ENCODE measurements at regions of chr2 and their contacts with region 1.

Region 1: DNA sequence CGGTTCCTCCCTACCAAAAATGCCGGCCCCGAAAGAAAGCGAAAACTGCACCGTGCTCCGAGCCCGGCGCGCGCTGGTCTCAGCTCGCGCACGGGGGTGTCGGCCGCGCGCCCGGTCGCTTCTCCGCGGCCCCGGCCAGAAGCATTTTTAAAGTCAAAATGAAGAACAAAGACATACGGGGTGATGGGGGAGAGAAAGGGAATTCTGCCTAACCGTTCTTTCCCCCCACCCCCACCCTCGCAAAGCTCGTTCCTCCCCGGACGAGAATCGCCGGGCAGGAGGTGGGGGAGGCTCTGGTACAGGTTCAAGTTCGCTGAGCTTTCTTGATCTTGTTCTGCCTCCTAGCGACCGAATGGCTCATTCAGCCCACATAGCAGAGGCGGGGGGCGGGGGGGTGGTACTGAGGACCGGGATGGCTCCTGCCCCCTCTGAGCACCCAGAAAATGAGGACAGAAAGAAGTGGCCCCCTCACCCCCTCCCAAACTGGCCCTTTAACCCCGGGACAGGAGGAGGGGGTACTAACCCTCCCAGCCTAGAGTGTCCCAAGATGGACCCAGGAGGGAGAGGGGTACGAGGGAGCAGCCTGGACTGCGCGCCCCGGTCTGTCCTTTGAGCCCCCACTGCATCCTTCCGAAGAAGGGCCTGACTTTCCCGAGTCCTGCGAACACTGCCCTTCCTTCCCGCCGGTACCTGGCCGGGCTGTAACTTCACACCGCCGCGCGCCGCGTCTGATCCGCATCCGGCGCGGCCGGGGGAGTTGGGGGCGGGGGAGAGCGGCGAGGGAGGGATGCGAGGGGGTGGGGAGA is 3.1 kb downstream of the BCL11A start:
- DNase-seq: peak; percentile 91
- H3K4me3 ChIP-seq: peak overlapping the region; percentile 93
- H3K27ac ChIP-seq: peak overlapping the region; percentile 90
- H3K4me1 ChIP-seq: peaks cover 31% of the 10 kb centered on the region
- CTCF ChIP-seq: peak; percentile 89

Region 2: GRCh38 chr2:60002158-60002867 is 548.1 kb before region 1 on chr2:
- CTCF ChIA-PET with region 1: no interaction called
- POLR2A ChIA-PET with region 1: no interaction called
- intact Hi-C with region 1: loop called (anchors 10 kb)
- DNase-seq: peak; percentile 20
- H3K4me3 ChIP-seq: no peak overlapping the region
- H3K27ac ChIP-seq: no peak overlapping the region
- H3K4me1 ChIP-seq: peaks cover 4% of the 10 kb centered on the region
- CTCF ChIP-seq: peak; percentile 51

Region 3: DNA sequence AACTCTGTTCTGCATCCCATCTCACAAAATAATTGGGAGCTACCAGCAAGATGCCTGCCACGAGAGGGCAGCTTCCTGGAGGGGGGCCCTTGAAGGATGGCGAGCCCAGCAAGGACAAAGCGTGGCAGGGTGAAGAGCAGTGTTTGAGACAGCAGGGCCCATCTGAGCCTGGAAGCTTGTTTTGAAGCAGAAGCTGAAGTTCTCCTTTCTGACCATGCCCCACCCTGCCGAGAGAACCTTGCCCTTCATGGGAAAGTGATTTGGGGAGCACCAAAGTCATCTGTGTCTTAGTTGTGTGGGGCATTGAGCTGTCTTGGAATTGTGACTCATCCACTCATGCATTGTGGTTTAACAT is 213.3 kb before region 1 on chr2:
- CTCF ChIA-PET with region 1: no interaction called
- POLR2A ChIA-PET with region 1: interaction called, 6 read pairs
- intact Hi-C with region 1: loop called (anchors 1 kb)
- DNase-seq: peak; percentile 54
- H3K4me3 ChIP-seq: no peak overlapping the region
- H3K27ac ChIP-seq: peak overlapping the region; percentile 64
- H3K4me1 ChIP-seq: peaks cover 24% of the 10 kb centered on the region
- CTCF ChIP-seq: peak; percentile 51

Region 4: DNA sequence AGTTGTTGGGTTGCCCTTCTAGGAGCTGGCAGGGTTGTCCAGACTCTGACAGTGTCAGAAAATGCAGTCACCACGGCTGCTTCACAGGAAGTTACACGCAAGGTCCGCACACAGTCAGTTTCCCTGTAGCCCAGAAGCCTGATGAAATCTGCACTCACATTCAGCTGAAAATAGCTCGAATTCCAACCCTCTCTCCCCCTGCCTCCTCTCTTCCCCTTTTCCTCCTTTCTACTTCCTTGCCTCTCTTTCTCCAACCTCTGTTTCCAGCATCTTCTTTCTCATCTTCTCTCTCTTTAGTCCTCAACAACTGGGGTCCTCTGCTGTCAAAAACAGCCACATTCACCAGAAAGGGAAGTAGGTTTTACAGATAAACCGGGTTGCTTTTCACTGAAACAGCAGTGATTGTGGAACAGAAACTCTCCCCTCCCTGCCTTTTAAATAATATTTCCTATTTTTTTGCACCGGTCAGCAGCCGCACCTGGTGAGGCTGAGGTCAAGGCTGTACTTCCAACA is 66.2 kb before region 1 on chr2:
- CTCF ChIA-PET with region 1: no interaction called
- POLR2A ChIA-PET with region 1: interaction called, 11 read pairs
- intact Hi-C with region 1: loop called (anchors 1 kb)
- DNase-seq: peak; percentile 80
- H3K4me3 ChIP-seq: peak overlapping the region; percentile 51
- H3K27ac ChIP-seq: peak overlapping the region; percentile 82
- H3K4me1 ChIP-seq: peaks cover 45% of the 10 kb centered on the region
- CTCF ChIP-seq: peak; percentile 26; the same call in 1 of the 2 replicates

Region 5: DNA sequence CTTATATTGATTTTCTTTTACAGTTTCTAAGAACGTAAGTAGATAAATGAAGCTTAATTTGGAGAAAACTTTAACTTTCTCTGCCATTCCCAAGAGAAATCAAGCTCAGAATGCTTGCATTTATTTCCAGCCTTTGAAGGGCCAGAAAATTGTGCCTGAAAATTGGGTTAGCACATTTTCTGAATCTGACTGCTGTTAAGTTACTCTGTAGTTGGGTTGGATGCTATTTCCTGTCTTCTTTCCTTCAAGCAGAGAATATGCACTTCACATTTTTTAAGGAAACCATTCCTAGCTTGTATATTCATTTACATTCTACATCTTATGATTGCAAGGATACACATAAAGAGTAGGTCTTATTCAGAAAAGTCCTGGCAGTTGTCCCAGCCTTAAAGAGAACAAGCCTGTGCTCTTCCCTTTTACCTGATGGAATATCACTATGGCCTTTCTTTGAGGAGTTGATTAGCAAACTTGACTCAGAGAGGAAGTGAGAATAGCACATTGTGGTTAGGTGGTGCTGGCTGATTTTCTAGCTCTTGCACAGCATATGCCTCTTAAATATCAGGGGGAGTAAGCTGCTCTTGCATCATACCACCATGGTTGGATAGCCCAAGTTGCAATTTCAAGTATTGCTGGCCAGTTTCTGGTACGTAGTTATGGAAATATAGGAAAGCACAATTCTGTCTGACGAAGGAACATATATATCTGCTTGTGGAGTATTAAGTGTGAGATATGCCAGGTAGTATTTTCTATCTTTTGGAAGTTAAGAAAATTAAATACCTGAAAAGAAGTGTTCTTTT is 1488.8 kb after region 1 on chr2:
- CTCF ChIA-PET with region 1: no interaction called
- POLR2A ChIA-PET with region 1: no interaction called
- intact Hi-C with region 1: loop called (anchors 10 kb)
- DNase-seq: peak; percentile 94
- H3K4me3 ChIP-seq: peak overlapping the region; percentile 39
- H3K27ac ChIP-seq: peak overlapping the region; percentile 89
- H3K4me1 ChIP-seq: peaks cover 32% of the 10 kb centered on the region
- CTCF ChIP-seq: no peak

Measured in OCI-LY7 (cell line).